B cell (primary cell): ENCODE measurements at regions of chr9 and their contacts with region 1.

Region 1: DNA sequence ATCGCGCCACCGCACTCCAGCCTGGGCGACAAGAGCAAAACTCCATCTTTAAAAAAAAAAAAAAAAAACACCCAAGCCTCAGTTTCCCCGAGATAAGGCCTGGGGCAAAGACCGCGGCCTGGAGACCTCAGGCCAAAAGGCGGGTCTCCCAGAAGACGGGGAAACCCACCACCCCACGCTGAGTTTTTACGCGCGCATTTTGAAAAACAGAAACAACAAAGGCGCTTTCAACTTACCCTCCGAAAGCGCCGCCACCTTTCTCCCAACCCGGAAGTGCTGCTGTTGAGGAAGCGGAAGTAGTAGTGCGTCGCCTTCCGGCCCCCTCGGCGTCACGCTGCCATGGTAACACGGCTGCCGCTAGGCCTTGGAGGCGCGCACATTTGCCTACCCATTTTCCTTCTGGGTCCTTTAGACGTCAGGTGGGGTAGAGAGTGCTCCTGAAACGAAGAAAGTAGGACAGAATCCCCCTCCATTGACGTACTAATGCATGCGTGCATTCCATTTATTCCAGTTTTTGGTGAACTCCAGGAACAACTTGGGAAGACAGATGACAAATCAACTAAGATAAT is at the start of gene TTF1:
- DNase-seq: peak; percentile 97
- ATAC-seq: peak; percentile 79
- H3K4me3 ChIP-seq: peak within 1 kb of the TSS; percentile 72 to 84 (median 77)
- H3K4me3 Mint-ChIP-seq: peak within 1 kb of the TSS; percentile 96
- H3K27ac ChIP-seq: peak within 1 kb of the TSS; percentile 52 to 84
- H3K27ac Mint-ChIP-seq: peak within 1 kb of the TSS; percentile 95
- H3K4me1 ChIP-seq: peaks cover 43 to 50% of the 10 kb centered on the region in 2 donors
- H3K4me1 Mint-ChIP-seq: peaks cover 49% of the 10 kb centered on the region
- H3K27me3 ChIP-seq: peaks cover 0 to 10% (median 2%) of the 10 kb centered on the region in 4 experiments
- H3K27me3 Mint-ChIP-seq: no peaks in the 10 kb centered on the region
- CTCF ChIP-seq: no peak
- total RNA-seq, gene TTF1: 26.3 and 28.5 TPM in 2 replicates

Region 2: DNA sequence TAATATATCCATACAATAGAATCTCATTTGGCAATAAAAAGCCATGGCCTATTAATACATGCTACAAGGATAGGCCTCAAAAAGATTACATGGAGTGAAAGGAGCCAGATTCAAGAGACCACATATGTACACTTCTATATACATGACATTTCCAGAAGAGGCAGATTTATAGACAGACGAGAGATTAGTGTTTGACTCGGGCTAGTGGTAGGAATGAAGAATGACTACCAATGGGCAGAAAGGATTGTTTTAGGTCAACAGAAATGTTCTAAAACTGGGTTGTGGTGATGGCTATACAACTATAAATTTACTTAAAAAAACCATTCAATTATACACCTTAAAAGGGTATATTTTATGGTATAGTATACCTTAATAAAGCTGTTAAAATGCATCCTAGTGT is 93.8 kb before region 1 on chr9:
- CTCF ChIA-PET with region 1: no interaction called
- POLR2A ChIA-PET with region 1: no interaction called
- intact Hi-C with region 1: no loop called
- DNase-seq: no peak
- ATAC-seq: no peak
- H3K4me3 ChIP-seq: no peak overlapping the region
- H3K4me3 Mint-ChIP-seq: no peak overlapping the region
- H3K27ac ChIP-seq: peak overlapping the region in 1 of 2 donors; percentile 50
- H3K27ac Mint-ChIP-seq: no peak overlapping the region
- H3K4me1 ChIP-seq: peaks cover 5 to 7% of the 10 kb centered on the region in 2 donors
- H3K4me1 Mint-ChIP-seq: peaks cover 23% of the 10 kb centered on the region
- H3K27me3 ChIP-seq: no peaks in the 10 kb centered on the region
- H3K27me3 Mint-ChIP-seq: no peaks in the 10 kb centered on the region
- CTCF ChIP-seq: no peak

Region 3: GRCh38 chr9:132354637-132355355 is 51.8 kb before region 1 on chr9 and contains the start of gene SETX:
- CTCF ChIA-PET with region 1: interaction called, 5 read pairs
- POLR2A ChIA-PET with region 1: interaction called, 7 read pairs
- intact Hi-C with region 1: loop called (anchors 1 kb)
- DNase-seq: peak; percentile 97
- ATAC-seq: peak; percentile 92
- H3K4me3 ChIP-seq: peak within 1 kb of the TSS; percentile 61 to 93 (median 88)
- H3K4me3 Mint-ChIP-seq: peak within 1 kb of the TSS; percentile 95
- H3K27ac ChIP-seq: peak within 1 kb of the TSS; percentile 88 to 97
- H3K27ac Mint-ChIP-seq: peak within 1 kb of the TSS; percentile 97
- H3K4me1 ChIP-seq: peaks cover 44 to 50% of the 10 kb centered on the region in 2 donors
- H3K4me1 Mint-ChIP-seq: peaks cover 52% of the 10 kb centered on the region
- H3K27me3 ChIP-seq: no peaks in the 10 kb centered on the region
- H3K27me3 Mint-ChIP-seq: no peaks in the 10 kb centered on the region
- CTCF ChIP-seq: no peak
- total RNA-seq, gene SETX: 105 and 114 TPM in 2 replicates

Region 4: DNA sequence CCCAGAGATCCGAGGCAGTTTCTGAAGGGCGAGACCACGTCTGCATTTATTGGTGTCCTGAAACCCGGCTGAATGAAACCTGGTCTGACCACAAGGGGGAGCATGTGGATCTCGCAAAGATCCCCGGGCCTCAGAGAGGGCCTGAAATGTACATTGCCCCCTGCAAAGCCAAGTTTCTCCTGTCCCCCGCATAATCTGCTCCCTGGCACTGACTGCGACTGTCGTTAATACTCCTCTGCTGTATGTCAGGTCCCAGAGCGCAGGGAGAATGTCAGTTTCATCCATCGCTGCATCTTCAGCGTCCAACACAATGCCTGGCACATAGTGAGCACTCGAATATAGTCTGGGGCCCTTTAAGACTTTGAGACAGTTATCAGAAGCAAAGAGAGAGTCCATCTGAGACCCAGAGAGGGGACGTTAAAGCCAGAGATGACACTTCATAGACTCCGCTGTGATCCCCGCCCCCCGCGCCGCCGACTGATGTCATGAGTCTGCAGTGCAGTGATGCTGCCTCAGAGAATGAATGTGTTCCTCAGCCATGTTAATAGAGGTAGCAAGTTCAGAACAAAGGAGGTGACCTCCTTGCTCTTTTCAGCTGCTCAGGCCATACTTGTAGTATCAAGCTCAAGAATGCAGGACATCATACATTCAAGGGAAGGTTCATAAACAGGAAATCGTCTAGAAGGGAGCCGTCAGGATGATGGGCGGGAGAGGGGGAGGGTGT is 101.3 kb after region 1 on chr9:
- CTCF ChIA-PET with region 1: interaction called, 3 read pairs
- POLR2A ChIA-PET with region 1: no interaction called
- intact Hi-C with region 1: loop called (anchors 5 kb)
- DNase-seq: peak; percentile 76
- ATAC-seq: peak; percentile 60
- H3K4me3 ChIP-seq: no peak overlapping the region
- H3K4me3 Mint-ChIP-seq: no peak overlapping the region
- H3K27ac ChIP-seq: no peak overlapping the region
- H3K27ac Mint-ChIP-seq: no peak overlapping the region
- H3K4me1 ChIP-seq: peaks cover 5 to 12% of the 10 kb centered on the region in 2 donors
- H3K4me1 Mint-ChIP-seq: peaks cover 4% of the 10 kb centered on the region
- H3K27me3 ChIP-seq: peaks cover 0 to 18% (median 0%) of the 10 kb centered on the region in 4 experiments
- H3K27me3 Mint-ChIP-seq: peaks cover 6% of the 10 kb centered on the region
- CTCF ChIP-seq: peak; percentile 82

Region 5: DNA sequence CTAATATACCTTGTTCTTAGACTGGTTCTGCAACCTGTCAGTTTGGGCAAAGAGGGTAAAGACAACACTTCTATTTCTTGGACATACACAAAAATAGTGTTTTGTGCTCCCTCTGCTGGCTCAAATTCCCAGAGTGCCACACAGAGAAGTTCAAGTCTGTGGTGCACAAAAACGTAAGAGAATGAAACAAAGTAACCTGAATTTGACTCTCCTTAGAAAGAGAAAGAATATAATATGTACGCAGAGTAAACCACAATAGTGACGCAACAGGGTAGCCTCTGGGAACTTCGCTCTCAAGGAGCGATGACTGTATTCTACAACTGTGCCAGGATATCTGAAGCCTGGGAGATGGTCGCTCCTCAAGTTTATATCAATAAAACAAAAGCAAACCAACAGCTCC is 244.6 kb after region 1 on chr9:
- CTCF ChIA-PET with region 1: no interaction called
- POLR2A ChIA-PET with region 1: no interaction called
- intact Hi-C with region 1: loop called (anchors 5 kb)
- DNase-seq: no peak
- ATAC-seq: no peak
- H3K4me3 ChIP-seq: no peak overlapping the region
- H3K4me3 Mint-ChIP-seq: no peak overlapping the region
- H3K27ac ChIP-seq: no peak overlapping the region
- H3K27ac Mint-ChIP-seq: no peak overlapping the region
- H3K4me1 ChIP-seq: no peaks in the 10 kb centered on the region
- H3K4me1 Mint-ChIP-seq: no peaks in the 10 kb centered on the region
- H3K27me3 ChIP-seq: no peaks in the 10 kb centered on the region
- H3K27me3 Mint-ChIP-seq: no peaks in the 10 kb centered on the region
- CTCF ChIP-seq: no peak

Region 6: GRCh38 chr9:132923346-132923902 is 516.8 kb after region 1 on chr9:
- CTCF ChIA-PET with region 1: no interaction called
- POLR2A ChIA-PET with region 1: no interaction called
- intact Hi-C with region 1: no loop called
- DNase-seq: no peak
- ATAC-seq: no peak
- H3K4me3 ChIP-seq: no peak overlapping the region
- H3K4me3 Mint-ChIP-seq: no peak overlapping the region
- H3K27ac ChIP-seq: no peak overlapping the region
- H3K27ac Mint-ChIP-seq: no peak overlapping the region
- H3K4me1 ChIP-seq: no peaks in the 10 kb centered on the region
- H3K4me1 Mint-ChIP-seq: no peaks in the 10 kb centered on the region
- H3K27me3 ChIP-seq: no peaks in the 10 kb centered on the region
- H3K27me3 Mint-ChIP-seq: no peaks in the 10 kb centered on the region
- CTCF ChIP-seq: no peak